Activated CD8-positive, alpha-beta T cell treated with anti-CD3 and anti-CD28 coated beads, Interleukin-2, amount 10 ng/mL, durations not matched to agents 7 days and 5 days (primary cell): ENCODE measurements at regions of chr17 and their contacts with region 1.

Region 1: DNA sequence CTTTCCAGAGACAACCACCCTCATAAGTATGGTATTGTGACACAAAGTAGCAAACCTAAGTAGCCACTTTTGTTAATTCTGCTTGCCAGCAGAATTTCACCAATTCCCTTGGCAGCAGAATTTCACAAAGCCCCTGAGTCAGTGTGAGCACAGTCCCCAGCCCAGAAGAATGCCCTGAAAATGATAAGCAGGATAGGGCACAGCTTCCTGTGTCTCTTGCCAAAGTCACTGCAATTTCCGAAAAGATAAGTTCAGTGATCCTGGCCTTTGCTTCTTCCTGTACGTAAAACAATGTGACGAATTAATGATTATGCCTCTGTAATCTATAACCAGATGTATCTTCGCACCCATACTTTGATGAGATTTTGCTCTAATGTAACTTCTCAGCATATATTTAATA is 16.0 kb upstream of the WIPF2 start:
- DNase-seq: no peak
- ATAC-seq: no peak
- H3K4me3 Mint-ChIP-seq: no peak overlapping the region
- H3K27ac Mint-ChIP-seq: no peak overlapping the region
- H3K4me1 Mint-ChIP-seq: peaks cover 9% of the 10 kb centered on the region
- H3K27me3 Mint-ChIP-seq: peaks cover 4% of the 10 kb centered on the region

Region 2: GRCh38 chr17:39872751-39873150 is 330.4 kb before region 1 on chr17:
- CTCF ChIA-PET with region 1: no interaction called
- POLR2A ChIA-PET with region 1: no interaction called
- DNase-seq: no peak
- ATAC-seq: no peak
- H3K4me3 Mint-ChIP-seq: no peak overlapping the region
- H3K27ac Mint-ChIP-seq: no peak overlapping the region
- H3K4me1 Mint-ChIP-seq: peaks cover 5% of the 10 kb centered on the region
- H3K27me3 Mint-ChIP-seq: peaks cover 6% of the 10 kb centered on the region

Region 3: DNA sequence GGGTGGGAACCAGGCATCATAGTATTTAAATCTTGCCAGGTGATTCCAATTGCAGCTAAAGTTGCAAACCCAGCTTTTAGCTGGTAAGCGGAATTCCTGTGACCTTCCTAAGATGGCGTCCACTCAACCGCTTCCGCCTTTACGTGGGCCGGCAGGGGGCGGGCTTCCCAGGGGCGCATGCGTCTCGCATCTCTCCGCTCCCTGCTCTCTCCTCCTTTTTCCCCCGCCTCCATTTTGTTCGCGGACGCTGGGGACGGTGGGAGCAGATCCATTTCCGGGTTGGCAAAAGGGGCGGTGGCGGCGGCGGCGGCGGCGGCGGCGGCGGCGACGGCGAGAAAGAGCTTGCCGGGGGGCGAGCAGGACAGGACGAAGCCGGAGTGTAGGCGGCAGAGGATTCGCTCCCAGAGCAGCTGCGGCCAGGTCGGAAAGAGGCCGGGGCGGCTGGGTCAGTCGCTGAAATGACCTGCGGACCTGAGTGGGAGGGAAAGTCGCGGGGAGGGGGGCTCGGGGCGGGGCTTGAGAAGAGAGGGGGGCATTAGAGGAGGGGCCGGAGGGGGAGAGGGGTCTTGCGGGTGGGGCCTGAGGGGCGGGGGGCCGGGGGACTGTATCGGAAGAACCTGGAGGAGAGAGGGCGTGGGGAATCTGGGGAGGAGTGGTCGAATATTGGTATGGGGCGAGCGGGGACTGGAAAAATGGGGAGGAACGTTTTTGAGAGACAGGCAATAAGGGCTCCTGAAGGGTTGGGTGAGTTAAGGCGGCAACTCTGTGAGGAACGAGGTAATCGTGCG is 16.1 kb after region 1 on chr17 and contains the start of gene WIPF2:
- CTCF ChIA-PET with region 1: interaction called, 22 read pairs
- POLR2A ChIA-PET with region 1: interaction called, 4 read pairs
- DNase-seq: peak; percentile 98
- ATAC-seq: peak; percentile 95
- H3K4me3 Mint-ChIP-seq: peak within 1 kb of the TSS; percentile 82
- H3K27ac Mint-ChIP-seq: peak within 1 kb of the TSS; percentile 99
- H3K4me1 Mint-ChIP-seq: peaks cover 22% of the 10 kb centered on the region
- H3K27me3 Mint-ChIP-seq: no peaks in the 10 kb centered on the region
- total RNA-seq, gene WIPF2: 22.0 to 27.4 TPM

Region 4: GRCh38 chr17:40287494-40288369 is 84.6 kb after region 1 on chr17 and contains the start of gene CDC6:
- CTCF ChIA-PET with region 1: interaction called, 100 read pairs
- POLR2A ChIA-PET with region 1: interaction called, 11 read pairs
- DNase-seq: peak; percentile 100
- ATAC-seq: peak; percentile 96
- H3K4me3 Mint-ChIP-seq: peak within 1 kb of the TSS; percentile 98
- H3K27ac Mint-ChIP-seq: peak within 1 kb of the TSS; percentile 97
- H3K4me1 Mint-ChIP-seq: peaks cover 45% of the 10 kb centered on the region
- H3K27me3 Mint-ChIP-seq: no peaks in the 10 kb centered on the region
- total RNA-seq, gene CDC6: 103 to 110 TPM